Left colon (tissue), 2 donors: ENCODE measurements at regions of chr11 and their contacts with region 1.

Region 1: DNA sequence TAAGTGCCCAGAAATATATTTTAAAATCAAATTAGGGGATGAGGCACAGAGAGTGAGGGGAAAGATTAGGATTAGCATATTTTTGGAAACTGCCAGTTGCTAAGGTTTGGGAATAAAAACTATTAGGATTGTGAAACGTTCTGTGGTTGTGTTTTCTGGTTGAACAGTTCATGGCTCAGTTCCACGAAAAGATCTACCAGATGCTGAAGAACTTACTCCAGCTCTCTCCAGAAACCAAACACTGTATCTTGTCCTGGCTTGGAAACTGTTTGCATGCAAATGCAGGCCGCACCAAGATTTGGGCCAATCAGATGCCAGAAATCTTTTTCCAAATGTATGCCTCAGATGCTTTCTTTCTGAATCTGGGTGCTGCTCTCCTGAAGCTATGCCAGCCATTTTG is 15.3 kb downstream of the UBE4A start:
- DNase-seq: no peak
- ATAC-seq: no peak

Region 2: GRCh38 chr11:117528097-117528721 is 846.5 kb before region 1 on chr11:
- intact Hi-C with region 1: no loop called
- DNase-seq: no peak
- ATAC-seq: no peak

Region 3: DNA sequence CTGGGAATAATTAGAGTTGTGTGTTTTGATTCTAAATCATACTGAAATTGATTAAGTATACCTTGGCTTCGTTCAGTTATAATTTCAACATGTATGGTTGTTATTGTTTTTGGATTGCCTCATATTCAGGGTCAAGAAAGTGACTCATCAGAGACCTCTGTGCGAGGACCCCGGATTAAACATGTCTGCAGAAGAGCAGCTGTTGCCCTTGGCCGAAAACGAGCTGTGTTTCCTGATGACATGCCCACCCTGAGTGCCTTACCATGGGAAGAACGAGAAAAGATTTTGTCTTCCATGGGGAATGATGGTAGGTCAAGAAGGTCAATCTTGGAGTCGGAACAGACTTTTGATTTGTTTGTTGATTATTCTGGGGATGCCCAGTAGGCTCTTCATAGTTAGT is 101.9 kb after region 1 on chr11:
- intact Hi-C with region 1: no loop called
- DNase-seq: no peak
- ATAC-seq: no peak

Region 4: DNA sequence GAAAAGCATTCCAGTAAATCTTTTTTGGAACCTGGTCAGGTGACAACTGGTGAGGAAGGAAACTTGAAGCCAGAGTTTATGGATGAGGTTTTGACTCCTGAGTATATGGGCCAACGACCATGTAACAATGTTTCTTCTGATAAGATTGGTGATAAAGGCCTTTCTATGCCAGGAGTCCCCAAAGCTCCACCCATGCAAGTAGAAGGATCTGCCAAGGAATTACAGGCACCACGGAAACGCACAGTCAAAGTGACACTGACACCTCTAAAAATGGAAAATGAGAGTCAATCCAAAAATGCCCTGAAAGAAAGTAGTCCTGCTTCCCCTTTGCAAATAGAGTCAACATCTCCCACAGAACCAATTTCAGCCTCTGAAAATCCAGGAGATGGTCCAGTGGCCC is 128.5 kb after region 1 on chr11:
- intact Hi-C with region 1: loop called in 1 of 2 experiments (anchors 10 kb)
- DNase-seq: no peak
- ATAC-seq: no peak